Right ventricle myocardium inferior (tissue), 1 donor: ENCODE measurements at regions of chrX and their contacts with region 1.

Region 1: GRCh38 chrX:39730662-39731397 is 366.9 kb downstream of the BCOR start:
- DNase-seq: peak; percentile 70
- ATAC-seq: peak; percentile 82

Region 2: GRCh38 chrX:39665830-39666518 is 64.9 kb before region 1 on chrX:
- intact Hi-C with region 1: loop called (anchors 10 kb)
- DNase-seq: no peak
- ATAC-seq: no peak

Region 3: DNA sequence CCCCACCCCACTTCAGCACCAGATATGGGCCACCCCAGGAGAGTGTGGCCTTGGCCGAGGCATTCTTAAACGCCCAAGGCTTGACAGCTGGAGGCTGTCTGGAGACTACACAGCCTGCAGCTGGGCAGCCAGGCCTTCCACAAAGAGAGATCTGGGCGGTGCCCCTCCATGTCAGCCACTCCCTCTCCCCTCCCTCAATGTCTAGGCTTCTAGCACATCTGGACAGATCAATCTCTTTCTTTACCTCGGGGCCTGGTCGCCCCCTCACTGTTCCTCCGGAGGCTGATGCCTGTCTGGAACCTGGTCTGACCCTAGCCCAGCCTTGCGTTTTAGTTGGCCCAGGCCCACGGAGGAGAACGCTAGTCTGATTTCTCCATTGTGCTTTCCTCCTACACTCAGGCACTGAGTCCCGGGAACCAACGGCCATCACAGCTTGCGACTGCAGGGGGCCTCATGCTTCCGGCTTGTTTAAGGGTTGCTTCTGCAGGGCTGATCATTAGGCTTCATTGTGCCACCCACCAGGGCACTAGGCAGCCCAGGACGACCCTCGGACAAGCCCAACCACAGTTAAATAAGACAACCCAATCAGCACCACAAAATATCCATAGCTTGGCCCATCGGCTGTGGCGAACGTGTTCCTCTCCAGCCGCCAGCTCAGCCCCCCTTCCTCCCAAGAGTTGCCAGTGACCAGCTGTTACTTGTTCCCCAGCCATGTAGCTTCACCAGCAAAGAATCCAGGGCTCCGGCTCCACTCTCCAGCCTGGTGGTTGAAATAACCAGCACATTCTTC is 166.3 kb after region 1 on chrX:
- intact Hi-C with region 1: loop called (anchors 10 kb)
- DNase-seq: no peak
- ATAC-seq: peak; percentile 88

Region 4: GRCh38 chrX:40097497-40098263 is 366.9 kb after region 1 on chrX and contains the start of gene BCOR:
- intact Hi-C with region 1: loop called (anchors 10 kb)
- DNase-seq: peak; percentile 83
- ATAC-seq: peak; percentile 67
- total RNA-seq, gene BCOR: 16.9 TPM